Adrenal gland (tissue), 19 donors: ENCODE measurements at regions of chr15 and their contacts with region 1.

Region 1: GRCh38 chr15:57138349-57138788 is 219.9 kb downstream of the TCF12 start:
- DNase-seq: peak in 6 of 7 donors; percentile 32 to 72 (median 39)
- H3K4me3 ChIP-seq: no peak overlapping the region
- H3K27ac ChIP-seq: no peak overlapping the region
- H3K4me1 ChIP-seq: peaks cover 3 to 42% of the 10 kb centered on the region in 2 donors
- H3K27me3 ChIP-seq: no peaks in the 10 kb centered on the region
- CTCF ChIP-seq: peak; percentile 62 to 83 (median 74)
- POLR2A ChIP-seq: no peak

Region 2: DNA sequence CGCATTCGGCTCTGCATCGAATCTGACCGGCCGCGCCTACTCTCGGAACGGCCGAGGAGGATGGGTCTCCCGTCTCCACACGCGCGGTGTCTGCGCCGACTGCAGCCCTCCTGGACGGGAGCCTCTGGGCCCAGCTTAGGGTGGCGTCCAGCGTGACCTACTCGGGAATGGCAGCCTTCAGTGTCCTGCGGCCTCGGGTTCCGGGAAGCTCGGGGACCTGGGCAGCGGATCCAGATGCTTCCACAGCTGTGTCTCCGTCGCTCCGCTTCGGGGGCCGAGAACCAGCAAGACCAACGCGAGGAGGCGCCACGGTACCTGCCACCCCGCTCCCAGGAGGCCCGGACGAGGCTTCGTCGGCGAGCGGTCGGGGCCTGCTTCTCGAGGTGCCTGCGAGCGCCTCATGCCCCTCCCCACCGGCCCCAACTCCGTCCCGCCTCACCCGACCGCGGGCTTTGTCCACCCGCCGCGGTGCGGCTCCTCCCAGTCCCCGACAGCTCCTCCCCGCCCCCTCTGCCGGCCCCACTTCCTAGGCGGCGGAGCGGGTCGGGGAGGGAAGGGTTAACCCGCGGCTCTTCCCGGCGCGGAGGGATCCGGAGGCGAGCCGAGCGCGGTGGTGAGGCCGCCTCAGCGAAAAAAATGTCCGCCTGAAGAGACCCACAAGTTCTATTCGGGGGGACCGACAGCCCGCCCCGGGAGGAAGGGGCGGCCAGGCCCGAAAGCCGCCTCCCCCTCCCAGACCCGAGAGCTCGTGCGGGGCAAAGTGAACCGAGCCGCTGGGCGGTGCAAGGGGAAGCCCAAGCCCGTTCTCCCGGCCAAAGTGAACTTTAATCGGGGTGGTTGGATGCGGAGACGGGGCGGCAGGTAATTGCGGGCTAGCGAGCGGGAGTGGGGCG is 220.1 kb before region 1 on chr15 and contains the start of gene TCF12:
- intact Hi-C with region 1: loop called (anchors 10 kb)
- DNase-seq: peak; percentile 92 to 96 (median 94)
- H3K4me3 ChIP-seq: peak within 1 kb of the TSS; percentile 30 to 98 (median 65)
- H3K27ac ChIP-seq: peak within 1 kb of the TSS; percentile 85 to 99 (median 97)
- H3K4me1 ChIP-seq: peaks cover 14 to 47% of the 10 kb centered on the region in 2 donors
- H3K27me3 ChIP-seq: no peaks in the 10 kb centered on the region
- CTCF ChIP-seq: peak in 5 of 6 experiments; percentile 28 to 47 (median 36)
- POLR2A ChIP-seq: peak; percentile 28 to 76
- total RNA-seq, gene TCF12: 51.6 to 121 (median 87.5) TPM

Region 3: DNA sequence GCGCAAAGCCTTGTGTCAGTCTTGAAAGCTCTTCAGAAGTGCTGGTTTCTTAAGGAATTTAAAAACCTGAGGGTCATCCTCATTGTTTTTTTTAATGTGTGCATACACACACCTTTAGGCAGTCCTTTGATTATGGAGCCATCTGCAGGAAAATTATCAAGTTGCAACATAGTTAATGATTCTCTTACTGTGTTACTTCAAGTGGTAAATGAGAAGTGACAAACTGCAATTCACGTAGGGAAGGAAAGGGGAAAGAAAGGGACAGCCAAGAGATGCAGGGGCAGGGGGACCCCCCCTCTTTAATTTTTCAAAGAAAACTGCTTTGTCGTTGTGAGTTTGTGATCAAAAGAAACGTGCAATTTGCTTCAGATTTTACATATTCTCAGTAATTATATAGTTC is 75.5 kb after region 1 on chr15:
- intact Hi-C with region 1: no loop called
- DNase-seq: no peak
- H3K4me3 ChIP-seq: no peak overlapping the region
- H3K27ac ChIP-seq: no peak overlapping the region
- H3K4me1 ChIP-seq: peaks cover 7 to 45% of the 10 kb centered on the region in 2 donors
- H3K27me3 ChIP-seq: no peaks in the 10 kb centered on the region
- CTCF ChIP-seq: peak; percentile 15 to 68 (median 58)
- POLR2A ChIP-seq: no peak

Region 4: GRCh38 chr15:57245130-57245529 is 106.8 kb after region 1 on chr15:
- intact Hi-C with region 1: no loop called
- DNase-seq: no peak
- H3K4me3 ChIP-seq: no peak overlapping the region
- H3K27ac ChIP-seq: no peak overlapping the region
- H3K4me1 ChIP-seq: no peaks in the 10 kb centered on the region
- H3K27me3 ChIP-seq: no peaks in the 10 kb centered on the region
- CTCF ChIP-seq: no peak
- POLR2A ChIP-seq: no peak